ENCODE measurements at regions of chr3 and their contacts with region 1.

Region 1: DNA sequence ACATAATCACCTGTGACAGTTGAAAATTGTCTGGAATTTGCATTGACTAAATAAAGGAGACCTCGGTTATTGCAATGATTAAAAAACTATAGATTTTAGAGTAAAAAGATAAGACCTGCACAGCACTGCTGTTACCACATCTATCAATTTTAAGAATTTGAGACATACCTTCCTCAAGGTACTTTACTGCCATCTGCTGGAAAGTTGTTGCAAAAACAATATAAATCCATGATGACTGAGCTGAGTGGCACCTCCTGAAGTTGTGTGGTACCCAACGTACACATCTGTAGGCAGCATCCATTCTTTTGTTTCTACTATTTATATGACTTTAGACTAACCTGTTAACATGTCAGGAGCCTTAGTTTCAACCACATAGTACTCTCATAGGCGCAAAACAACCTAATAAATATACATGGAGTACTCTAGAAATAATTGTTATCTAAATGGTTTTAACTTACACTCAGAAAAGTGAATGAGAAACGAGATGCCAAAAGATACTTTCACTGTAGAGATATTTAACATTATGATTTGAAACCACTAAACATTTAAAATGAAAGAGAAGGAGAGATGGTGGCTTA is 106.7 kb downstream of the GHSR start:
- DNase-seq: peak in 3 of 9 experiments; percentile 15 to 73 (median 63)
- ATAC-seq: peak; percentile 75
- H3K4me3 ChIP-seq: no peak overlapping the region
- H3K4me3 Mint-ChIP-seq: no peak overlapping the region
- H3K27ac ChIP-seq: no peak overlapping the region
- H3K27ac Mint-ChIP-seq: no peak overlapping the region
- H3K4me1 ChIP-seq: no peaks in the 10 kb centered on the region
- H3K4me1 Mint-ChIP-seq: no peaks in the 10 kb centered on the region
- H3K27me3 ChIP-seq: no peaks in the 10 kb centered on the region
- H3K27me3 Mint-ChIP-seq: no peaks in the 10 kb centered on the region
- CTCF ChIP-seq: peak; percentile 74

Region 2: GRCh38 chr3:171049861-171050444 is 1291.6 kb before region 1 on chr3:
- CTCF ChIA-PET with region 1: no interaction called
- POLR2A ChIA-PET with region 1: no interaction called
- intact Hi-C with region 1: loop called in 1 of 2 experiments (anchors 10 kb)
- DNase-seq: peak in 8 of 9 experiments; percentile 4 to 50 (median 26)
- ATAC-seq: peak; percentile 55
- H3K4me3 ChIP-seq: no peak overlapping the region
- H3K4me3 Mint-ChIP-seq: no peak overlapping the region
- H3K27ac ChIP-seq: no peak overlapping the region
- H3K27ac Mint-ChIP-seq: no peak overlapping the region
- H3K4me1 ChIP-seq: no peaks in the 10 kb centered on the region
- H3K4me1 Mint-ChIP-seq: no peaks in the 10 kb centered on the region
- H3K27me3 ChIP-seq: no peaks in the 10 kb centered on the region
- H3K27me3 Mint-ChIP-seq: peaks cover 11% of the 10 kb centered on the region
- CTCF ChIP-seq: peak; percentile 28

Region 3: GRCh38 chr3:171646357-171647133 is 695.0 kb before region 1 on chr3:
- CTCF ChIA-PET with region 1: interaction called, 29 read pairs
- POLR2A ChIA-PET with region 1: no interaction called
- intact Hi-C with region 1: loop called (anchors 1 to 2 kb)
- DNase-seq: peak in 2 of 9 experiments; percentile 29 to 42
- ATAC-seq: no peak
- H3K4me3 ChIP-seq: no peak overlapping the region
- H3K4me3 Mint-ChIP-seq: no peak overlapping the region
- H3K27ac ChIP-seq: no peak overlapping the region
- H3K27ac Mint-ChIP-seq: no peak overlapping the region
- H3K4me1 ChIP-seq: no peaks in the 10 kb centered on the region
- H3K4me1 Mint-ChIP-seq: no peaks in the 10 kb centered on the region
- H3K27me3 ChIP-seq: no peaks in the 10 kb centered on the region
- H3K27me3 Mint-ChIP-seq: no peaks in the 10 kb centered on the region
- CTCF ChIP-seq: peak; percentile 29

Region 4: DNA sequence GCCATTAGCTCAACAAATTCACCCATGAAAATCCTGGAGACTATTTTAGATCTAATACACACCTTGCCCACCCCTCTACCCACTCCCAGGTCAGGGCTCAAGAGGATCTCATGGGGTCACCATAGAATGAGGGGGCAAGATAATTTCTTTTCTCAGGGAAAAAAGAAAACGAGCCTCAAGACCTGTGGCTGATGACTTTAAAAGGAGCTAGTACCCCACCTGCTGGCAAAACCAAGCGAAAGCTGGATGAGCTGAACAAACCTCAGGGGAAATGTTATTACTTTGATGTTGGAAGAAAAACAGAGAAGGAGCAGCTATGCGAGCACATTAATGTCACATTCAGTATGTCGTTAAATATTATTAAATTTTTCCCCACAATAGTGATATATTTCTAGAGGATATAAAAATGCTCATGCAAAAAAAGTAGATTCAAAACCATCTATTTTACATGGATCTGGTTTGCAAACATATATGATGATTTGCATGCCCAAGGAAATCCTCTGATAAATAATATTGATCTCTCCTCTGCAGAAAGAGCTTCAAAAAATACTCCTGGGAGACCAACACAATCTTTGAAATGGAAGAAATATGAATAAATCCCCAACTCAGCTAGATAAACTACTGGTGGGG is 569.0 kb before region 1 on chr3:
- CTCF ChIA-PET with region 1: interaction called, 3 read pairs
- POLR2A ChIA-PET with region 1: no interaction called
- intact Hi-C with region 1: loop called in 1 of 2 experiments (anchors 5 kb)
- DNase-seq: peak in 8 of 9 experiments; percentile 13 to 61 (median 40)
- ATAC-seq: peak; percentile 36
- H3K4me3 ChIP-seq: no peak overlapping the region
- H3K4me3 Mint-ChIP-seq: no peak overlapping the region
- H3K27ac ChIP-seq: no peak overlapping the region
- H3K27ac Mint-ChIP-seq: no peak overlapping the region
- H3K4me1 ChIP-seq: no peaks in the 10 kb centered on the region
- H3K4me1 Mint-ChIP-seq: no peaks in the 10 kb centered on the region
- H3K27me3 ChIP-seq: no peaks in the 10 kb centered on the region
- H3K27me3 Mint-ChIP-seq: peaks cover 5% of the 10 kb centered on the region
- CTCF ChIP-seq: peak; percentile 58

Region 5: DNA sequence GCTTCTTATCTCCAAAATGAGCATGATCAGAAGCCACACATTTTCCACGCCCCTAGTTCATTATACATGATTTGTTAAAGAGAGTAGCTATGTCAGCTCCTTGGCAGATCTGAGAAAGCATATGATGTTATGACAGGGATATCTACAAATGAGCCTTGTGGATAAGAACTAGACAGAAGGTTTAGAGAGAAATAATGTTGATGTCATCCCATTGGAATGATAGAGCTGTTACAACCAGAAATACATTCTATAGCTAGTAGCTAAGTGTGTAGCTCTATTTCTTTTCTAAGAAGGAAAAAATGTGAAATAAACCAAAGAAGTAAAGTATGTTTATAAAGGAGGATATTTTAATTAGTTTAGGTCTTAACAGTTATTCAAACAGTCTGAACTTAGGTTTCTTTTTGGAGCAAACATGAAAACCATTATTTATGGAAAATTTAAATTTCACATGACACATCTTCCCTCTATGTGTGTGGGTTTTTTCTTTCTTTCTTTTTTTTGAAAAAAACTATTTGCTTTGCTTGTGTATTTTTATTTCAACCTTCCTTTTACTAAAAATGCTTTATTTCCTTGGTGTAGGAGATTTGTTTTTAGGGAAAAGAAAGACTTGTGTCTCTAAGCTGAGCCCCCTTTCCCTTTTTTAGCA is 61.0 kb before region 1 on chr3:
- CTCF ChIA-PET with region 1: no interaction called
- POLR2A ChIA-PET with region 1: no interaction called
- intact Hi-C with region 1: no loop called
- DNase-seq: no peak
- ATAC-seq: no peak
- H3K4me3 ChIP-seq: no peak overlapping the region
- H3K4me3 Mint-ChIP-seq: no peak overlapping the region
- H3K27ac ChIP-seq: no peak overlapping the region
- H3K27ac Mint-ChIP-seq: no peak overlapping the region
- H3K4me1 ChIP-seq: no peaks in the 10 kb centered on the region
- H3K4me1 Mint-ChIP-seq: no peaks in the 10 kb centered on the region
- H3K27me3 ChIP-seq: no peaks in the 10 kb centered on the region
- H3K27me3 Mint-ChIP-seq: no peaks in the 10 kb centered on the region
- CTCF ChIP-seq: no peak